ENCODE measurements at regions of chr14 and their contacts with region 1.

Region 1: DNA sequence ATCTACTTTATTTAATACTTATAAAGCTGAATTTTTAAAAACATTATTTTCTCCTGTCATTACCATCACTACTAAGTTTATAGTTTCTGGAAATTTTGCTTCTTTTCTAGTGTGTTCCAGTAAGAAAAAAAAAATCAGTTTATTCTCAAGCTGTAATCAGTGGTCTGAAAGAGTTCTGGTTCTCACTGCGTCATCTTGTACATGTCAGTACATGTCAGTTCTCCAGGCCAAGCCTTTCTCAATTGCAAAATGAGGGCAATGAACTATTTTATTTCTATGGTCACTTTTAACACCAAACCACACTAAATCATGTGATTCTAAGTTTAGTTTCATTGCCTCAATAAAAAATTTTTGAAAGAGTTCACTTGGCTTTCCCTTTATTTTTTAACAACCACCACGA is 468.9 kb upstream of the LRFN5 start:
- DNase-seq: no peak

Region 2: GRCh38 chr14:41201721-41202120 is 64.0 kb after region 1 on chr14:
- intact Hi-C with region 1: loop called (anchors 2 kb)
- DNase-seq: no peak